Posterior cingulate gyrus (tissue), 11 donors: ENCODE measurements at regions of chr17 and their contacts with region 1.

Region 1: GRCh38 chr17:60036796-60037612 is 41.7 kb downstream of the HEATR6 start:
- DNase-seq: peak in 9 of 10 donors; percentile 51 to 94 (median 65)

Region 2: DNA sequence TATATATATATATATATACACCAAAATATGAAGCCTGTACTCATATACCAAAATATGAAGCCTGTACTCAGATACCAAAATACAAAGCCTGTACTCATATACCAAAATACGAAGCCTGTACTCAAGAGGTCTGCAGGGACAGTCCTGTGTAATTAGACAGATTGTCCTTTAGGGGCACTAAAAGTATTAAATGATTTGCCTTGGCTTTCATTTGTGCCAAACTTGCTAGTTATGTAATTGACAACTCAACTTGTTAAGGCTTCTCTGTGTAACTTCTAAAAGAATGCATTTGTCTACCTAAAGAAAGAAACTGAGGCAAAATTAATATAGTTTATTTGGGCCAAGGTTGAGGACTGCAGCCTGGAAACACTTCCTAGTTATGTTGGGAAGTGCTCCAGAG is 502.4 kb before region 1 on chr17:
- intact Hi-C with region 1: no loop called
- DNase-seq: no peak

Region 3: DNA sequence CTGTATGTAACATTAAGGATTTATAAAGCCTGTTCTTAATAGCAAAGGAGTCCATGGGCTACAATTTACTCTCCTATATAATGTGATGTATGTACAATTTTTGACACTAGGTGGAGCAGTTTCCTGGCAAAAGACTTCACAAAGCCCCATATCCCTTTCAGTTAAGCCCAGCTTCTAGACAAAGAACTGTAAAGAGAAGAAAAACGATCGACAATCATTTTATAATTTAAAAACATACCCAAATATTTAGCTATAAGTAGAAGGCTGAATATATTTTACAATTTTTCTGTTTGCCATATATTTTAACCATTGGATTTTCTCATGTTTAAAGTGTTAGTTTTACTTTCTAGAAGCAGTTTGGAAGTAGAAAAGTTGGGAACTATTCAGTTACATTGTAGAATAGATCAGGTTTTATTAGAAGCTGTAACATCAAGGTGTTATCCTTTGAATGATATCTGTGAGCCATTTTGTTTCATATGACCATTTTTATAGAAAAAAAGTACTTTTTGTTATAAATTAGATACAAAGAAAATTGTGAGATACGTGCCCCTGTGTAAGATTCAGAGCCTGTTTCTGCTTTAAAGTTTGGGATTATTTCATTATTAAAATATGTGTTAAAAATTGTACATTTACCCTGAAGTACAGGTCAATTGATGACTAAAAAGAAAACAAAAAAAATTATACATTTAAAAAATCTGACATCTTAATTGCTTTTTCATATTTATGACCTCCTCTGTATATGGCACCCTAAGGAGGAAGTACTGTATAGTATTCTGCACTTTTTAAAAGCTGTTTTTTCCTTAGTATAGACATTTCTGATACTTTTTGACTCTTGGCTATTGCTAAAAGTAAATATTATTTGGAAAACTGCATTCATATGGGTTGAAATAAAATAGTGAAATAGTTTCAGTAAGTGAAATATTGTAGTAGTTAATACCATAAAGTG is 283.2 kb before region 1 on chr17:
- intact Hi-C with region 1: loop called (anchors 5 kb)
- DNase-seq: no peak

Region 4: GRCh38 chr17:59914274-59914854 is 122.6 kb before region 1 on chr17:
- intact Hi-C with region 1: loop called (anchors 5 kb)
- DNase-seq: no peak

Region 5: GRCh38 chr17:60065136-60065535 is 28.1 kb after region 1 on chr17:
- intact Hi-C with region 1: no loop called
- DNase-seq: no peak